ENCODE measurements at regions of chr17 and their contacts with region 1.

Region 1: GRCh38 chr17:58112970-58113631 is 29.9 kb downstream of the DYNLL2 start:
- DNase-seq: peak; percentile 88

Region 2: GRCh38 chr17:57121338-57122042 is 991.6 kb before region 1 on chr17:
- intact Hi-C with region 1: loop called (anchors 5 kb)
- DNase-seq: no peak

Region 3: DNA sequence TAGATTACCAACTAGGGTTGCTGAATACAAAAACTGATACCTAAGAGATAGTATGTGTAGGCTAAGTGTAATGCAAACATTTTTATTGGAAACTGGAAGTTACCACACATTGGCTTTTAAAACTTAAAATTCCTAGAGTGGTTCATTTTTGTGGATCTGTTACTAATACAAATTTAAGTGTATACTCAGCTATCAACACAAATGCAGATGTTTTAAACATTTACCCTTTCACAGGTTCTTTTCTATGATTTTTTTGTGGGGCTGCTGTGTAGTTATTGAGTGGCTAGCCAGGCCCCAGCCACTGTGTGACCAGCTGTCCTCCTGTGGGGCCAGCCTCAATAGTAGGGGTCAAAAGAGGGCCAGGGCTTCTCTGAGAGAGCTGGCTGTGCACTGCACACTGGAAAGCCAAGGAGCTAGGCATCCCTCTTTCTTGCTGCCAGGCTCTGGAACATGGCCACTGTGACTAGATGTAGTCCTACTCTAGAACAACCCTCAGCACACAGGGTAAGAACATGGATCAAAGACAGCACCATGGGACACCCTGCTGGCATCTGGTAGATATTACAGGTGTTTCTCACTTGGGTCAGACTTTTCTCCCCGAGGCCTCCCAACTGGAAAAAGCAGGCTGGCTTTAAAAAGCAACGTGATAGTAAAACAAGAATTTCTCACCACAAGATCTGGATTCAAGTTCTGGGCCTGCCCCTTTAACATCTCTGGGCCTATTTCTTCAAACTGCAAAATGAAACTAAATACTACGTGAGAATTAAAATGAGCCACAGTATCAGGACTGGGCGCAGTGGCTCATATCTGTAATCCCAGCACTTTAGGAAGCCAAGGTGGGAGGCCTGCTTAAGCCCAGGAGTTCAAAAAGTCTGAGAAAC is 117.8 kb before region 1 on chr17:
- intact Hi-C with region 1: loop called (anchors 5 kb)
- DNase-seq: peak; percentile 78

Region 4: DNA sequence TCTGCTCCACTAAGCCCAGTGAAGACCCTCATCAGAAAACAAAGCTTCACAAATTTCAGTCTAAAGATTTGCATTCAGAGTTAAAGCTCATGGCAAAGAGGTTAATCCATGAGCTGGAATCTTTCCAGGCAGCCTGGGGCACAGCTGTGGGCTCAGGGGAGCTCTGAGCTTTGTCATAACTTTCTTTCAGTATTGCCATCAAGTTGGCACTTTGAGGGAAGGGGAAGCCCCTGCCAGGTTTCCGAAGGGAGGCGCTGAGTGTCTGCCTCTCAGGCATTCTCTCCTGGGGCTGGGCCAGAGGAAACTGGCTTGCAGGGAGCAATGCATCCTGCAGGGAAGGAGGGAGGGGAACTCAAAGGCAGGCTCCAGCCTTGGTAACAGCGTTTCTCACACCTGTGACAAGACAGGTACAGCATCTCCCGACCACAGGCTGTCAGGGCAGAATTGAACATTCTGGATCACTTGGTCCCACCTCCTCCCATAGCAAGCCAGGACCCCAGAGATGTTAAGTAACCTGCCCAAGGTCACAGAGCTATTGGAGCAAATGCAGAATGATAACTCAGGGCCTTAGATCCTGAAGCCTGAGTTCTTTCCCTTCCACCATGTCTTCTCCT is 129.2 kb after region 1 on chr17:
- intact Hi-C with region 1: no loop called
- DNase-seq: no peak

Measured in cardiac septum (tissue), 1 donor.